ENCODE measurements at regions of chr17 and their contacts with region 1.

Region 1: DNA sequence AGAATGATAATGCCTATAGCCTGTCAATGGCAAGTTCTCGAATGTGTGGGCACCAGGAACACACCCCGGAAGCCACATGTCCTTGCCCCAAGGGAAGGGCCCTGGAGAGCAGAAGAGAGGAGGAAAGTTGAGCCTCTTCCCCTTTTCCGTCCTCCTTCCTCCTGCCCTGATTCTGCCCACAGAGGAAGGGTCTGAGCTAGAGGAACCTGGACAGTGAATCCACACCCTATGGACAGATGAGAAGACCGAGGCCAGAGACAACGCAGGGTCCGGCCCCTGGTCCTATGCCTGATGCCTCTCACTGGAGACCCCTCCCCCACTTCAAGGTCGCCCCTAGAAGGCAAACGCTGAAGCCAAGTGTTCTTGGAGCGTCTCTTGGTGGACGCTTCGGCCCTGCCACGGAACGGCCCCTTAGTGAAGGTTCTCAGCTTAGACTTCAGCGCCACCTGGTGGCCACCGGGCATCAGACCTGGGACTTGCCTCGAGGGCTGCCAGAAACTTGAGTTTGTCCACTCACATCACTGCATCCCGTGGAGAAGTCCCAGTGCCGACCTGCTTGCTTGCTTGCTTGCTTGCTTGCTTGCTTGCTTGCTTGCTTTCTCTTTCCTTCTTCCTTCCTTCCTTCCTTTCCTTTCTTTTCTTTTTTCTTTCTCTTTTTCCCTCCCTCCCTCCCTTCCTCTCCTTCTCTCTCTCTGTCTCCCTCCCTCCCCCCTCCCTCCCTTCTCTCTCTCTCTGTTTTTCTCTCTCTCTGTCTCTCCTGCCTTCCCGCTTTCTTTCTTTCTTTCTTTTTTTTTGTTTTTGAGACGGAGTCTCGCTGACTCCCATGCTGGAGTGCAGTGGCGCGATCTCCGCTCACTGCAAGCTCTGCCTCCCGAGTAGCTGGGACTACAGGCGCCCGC is 20.6 kb upstream of the SPNS3 start:
- H3K4me3 Mint-ChIP-seq: peak overlapping the region; percentile 75
- H3K27ac Mint-ChIP-seq: peak overlapping the region; percentile 91
- H3K4me1 Mint-ChIP-seq: peaks cover 28% of the 10 kb centered on the region
- H3K27me3 Mint-ChIP-seq: peaks cover 12% of the 10 kb centered on the region

Region 2: DNA sequence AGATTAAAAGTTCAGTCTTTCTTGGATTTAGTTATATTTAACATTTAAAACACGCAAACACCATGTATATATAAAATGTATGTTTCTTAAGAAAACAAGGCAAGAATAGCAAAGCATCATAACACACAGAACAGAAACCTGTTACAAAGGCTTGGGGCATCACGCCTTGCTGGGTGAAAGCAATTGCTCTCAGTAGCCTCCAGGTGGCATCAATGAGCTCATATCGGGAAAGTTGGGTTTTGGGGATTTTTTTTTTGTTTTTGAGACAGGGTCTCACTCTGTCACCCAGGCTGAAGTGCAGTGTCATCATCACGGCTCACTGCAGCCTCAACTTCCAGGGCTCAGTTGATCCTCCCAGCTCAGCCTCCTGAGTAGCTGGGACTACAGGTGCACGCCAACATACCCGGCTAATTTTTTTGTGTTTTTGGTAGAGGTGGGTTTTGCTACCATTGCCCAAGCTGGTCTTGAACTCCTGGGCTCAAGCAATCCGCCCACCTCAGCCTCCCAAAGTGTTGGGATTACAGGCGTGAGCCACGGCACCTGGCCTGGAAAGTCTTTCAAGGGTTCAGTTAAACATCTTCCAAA is 213.3 kb before region 1 on chr17:
- intact Hi-C with region 1: loop called (anchors 1 kb)
- H3K4me3 Mint-ChIP-seq: no peak overlapping the region
- H3K27ac Mint-ChIP-seq: no peak overlapping the region
- H3K4me1 Mint-ChIP-seq: no peaks in the 10 kb centered on the region
- H3K27me3 Mint-ChIP-seq: peaks cover 18% of the 10 kb centered on the region

Region 3: DNA sequence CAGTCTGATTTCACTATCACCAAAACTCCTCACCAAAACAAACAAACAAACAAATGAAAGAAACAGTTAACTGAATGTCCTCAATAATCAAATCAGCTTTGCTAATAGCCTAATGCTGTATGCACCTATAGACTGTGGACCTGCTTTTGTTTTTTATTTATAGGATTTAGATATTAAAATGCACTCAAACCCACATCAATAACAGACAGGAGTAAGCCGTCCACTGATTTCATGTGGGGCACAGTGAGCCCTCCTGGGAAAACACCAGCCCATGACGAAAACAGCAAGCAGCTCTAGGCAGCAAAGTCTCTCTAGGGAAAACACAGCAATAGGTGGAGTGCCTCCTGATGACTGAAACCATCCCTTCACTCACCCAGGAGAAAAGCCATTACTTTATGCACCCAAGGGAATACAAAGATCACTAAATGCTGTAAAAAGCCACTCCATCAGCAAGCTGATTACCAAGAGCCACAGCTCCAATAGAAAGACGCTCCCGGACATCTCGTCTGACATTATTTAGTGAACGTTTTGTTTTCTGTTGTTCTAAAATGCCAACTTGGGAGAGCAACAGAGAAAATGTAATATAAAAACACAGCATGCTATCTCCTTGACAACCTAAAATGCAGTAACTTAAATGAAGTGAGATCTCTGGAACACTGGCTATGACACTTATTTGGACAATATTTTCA is 197.2 kb before region 1 on chr17:
- intact Hi-C with region 1: loop called (anchors 1 kb)
- H3K4me3 Mint-ChIP-seq: no peak overlapping the region
- H3K27ac Mint-ChIP-seq: peak overlapping the region; percentile 57
- H3K4me1 Mint-ChIP-seq: peaks cover 22% of the 10 kb centered on the region
- H3K27me3 Mint-ChIP-seq: peaks cover 19% of the 10 kb centered on the region

Region 4: GRCh38 chr17:4366327-4367063 is 46.7 kb before region 1 on chr17 and contains the start of gene UBE2G1:
- intact Hi-C with region 1: loop called (anchors 2 kb)
- H3K4me3 Mint-ChIP-seq: peak within 1 kb of the TSS; percentile 82
- H3K27ac Mint-ChIP-seq: peak within 1 kb of the TSS; percentile 93
- H3K4me1 Mint-ChIP-seq: peaks cover 22% of the 10 kb centered on the region
- H3K27me3 Mint-ChIP-seq: no peaks in the 10 kb centered on the region

Region 5: DNA sequence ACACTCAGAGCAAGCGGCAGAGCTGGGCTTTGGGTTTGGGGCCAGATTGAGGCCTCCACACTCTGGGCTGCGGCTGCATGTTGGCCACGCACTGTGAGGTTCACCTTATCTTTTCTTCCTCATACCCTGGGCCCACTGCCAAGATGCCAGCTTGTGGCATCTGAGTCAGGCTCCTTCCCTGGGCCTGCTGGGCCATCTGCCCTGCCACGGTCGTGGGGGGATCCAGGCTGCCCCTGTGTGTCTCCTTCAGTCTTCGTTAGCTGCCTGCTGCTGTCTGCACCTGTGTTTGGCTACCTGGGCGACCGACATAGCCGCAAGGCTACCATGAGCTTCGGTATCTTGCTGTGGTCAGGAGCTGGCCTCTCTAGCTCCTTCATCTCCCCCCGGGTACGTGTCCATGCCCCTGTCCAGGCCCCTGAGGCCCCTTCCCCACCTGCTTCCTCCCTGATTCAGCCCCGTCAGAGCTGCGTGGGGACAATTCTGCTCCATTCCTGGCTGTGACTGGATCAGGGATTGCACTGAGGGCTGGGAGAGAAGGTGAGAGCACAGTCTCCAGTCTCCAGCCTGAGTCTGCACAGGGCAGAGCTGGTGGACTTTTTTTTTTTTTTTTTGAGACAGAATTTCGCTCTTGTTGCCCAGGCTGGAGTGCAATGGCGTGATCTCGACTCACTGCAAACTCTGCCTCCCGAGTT is 31.7 kb after region 1 on chr17:
- intact Hi-C with region 1: no loop called
- H3K4me3 Mint-ChIP-seq: no peak overlapping the region
- H3K27ac Mint-ChIP-seq: peak overlapping the region; percentile 20
- H3K4me1 Mint-ChIP-seq: peaks cover 48% of the 10 kb centered on the region
- H3K27me3 Mint-ChIP-seq: peaks cover 3% of the 10 kb centered on the region

Region 6: GRCh38 chr17:4509401-4509800 is 96.2 kb after region 1 on chr17:
- intact Hi-C with region 1: no loop called
- H3K4me3 Mint-ChIP-seq: no peak overlapping the region
- H3K27ac Mint-ChIP-seq: peak overlapping the region; percentile 7
- H3K4me1 Mint-ChIP-seq: peaks cover 41% of the 10 kb centered on the region
- H3K27me3 Mint-ChIP-seq: peaks cover 57% of the 10 kb centered on the region

Region 7: GRCh38 chr17:4520894-4521600 is 107.9 kb after region 1 on chr17:
- intact Hi-C with region 1: no loop called
- H3K4me3 Mint-ChIP-seq: no peak overlapping the region
- H3K27ac Mint-ChIP-seq: no peak overlapping the region
- H3K4me1 Mint-ChIP-seq: peaks cover 22% of the 10 kb centered on the region
- H3K27me3 Mint-ChIP-seq: peaks cover 3% of the 10 kb centered on the region